Activated naive CD4-positive, alpha-beta T cell treated with anti-CD3 and anti-CD28 coated beads for 36 hours (primary cell): ENCODE measurements at regions of chr7 and their contacts with region 1.

Region 1: DNA sequence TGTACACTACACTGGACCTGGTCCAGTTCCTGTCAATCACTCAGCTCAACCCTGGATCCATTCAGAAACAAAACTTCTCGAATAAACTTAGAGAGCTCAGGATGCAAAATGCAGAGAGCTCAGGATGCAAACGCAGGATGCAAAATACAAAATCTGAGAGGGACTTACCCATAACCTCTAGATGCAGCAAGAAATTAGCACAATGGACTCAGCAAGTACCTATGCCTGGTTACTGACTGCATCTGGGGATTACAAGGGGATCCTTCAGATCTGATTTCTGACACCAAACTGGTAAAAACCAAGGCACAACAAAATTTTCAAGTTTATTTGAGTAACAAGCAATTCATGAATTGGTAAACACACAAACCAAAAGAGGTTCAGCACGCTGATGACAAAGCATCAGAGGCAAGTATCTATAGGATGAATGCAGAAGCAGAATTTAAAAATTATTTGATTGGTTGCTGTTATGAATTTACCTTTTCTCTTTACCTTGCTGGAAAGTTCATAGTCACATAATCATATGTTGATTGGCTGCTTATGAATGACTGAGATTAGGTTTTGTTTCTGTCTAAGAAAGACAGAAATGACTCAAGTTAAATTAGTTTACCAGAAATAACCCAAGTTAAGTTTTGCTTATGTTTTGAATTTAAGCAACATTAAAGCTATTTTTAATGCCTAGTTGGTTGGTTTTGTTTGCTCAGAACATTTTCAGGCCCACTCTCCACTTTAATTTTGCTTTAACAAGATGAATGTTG is 11.4 kb downstream of the GIMAP6 start:
- DNase-seq: peak; percentile 10
- H3K4me3 Mint-ChIP-seq: peak overlapping the region; percentile 8
- H3K27ac Mint-ChIP-seq: peak overlapping the region; percentile 82
- H3K4me1 Mint-ChIP-seq: peaks cover 53% of the 10 kb centered on the region
- H3K27me3 Mint-ChIP-seq: no peaks in the 10 kb centered on the region

Region 2: GRCh38 chr7:150507947-150508602 is 112.7 kb before region 1 on chr7:
- CTCF ChIA-PET with region 1: no interaction called
- intact Hi-C with region 1: loop called (anchors 1 kb)
- DNase-seq: peak; percentile 61
- H3K4me3 Mint-ChIP-seq: peak overlapping the region; percentile 79
- H3K27ac Mint-ChIP-seq: peak overlapping the region; percentile 96
- H3K4me1 Mint-ChIP-seq: peaks cover 97% of the 10 kb centered on the region
- H3K27me3 Mint-ChIP-seq: no peaks in the 10 kb centered on the region

Region 3: GRCh38 chr7:150631866-150632864 is 11.4 kb after region 1 on chr7 and contains the start of gene GIMAP6:
- CTCF ChIA-PET with region 1: interaction called, 9 read pairs
- intact Hi-C with region 1: loop called (anchors 1 kb)
- DNase-seq: peak; percentile 64
- H3K4me3 Mint-ChIP-seq: peak within 1 kb of the TSS; percentile 85
- H3K27ac Mint-ChIP-seq: peak within 1 kb of the TSS; percentile 92
- H3K4me1 Mint-ChIP-seq: peaks cover 67% of the 10 kb centered on the region
- H3K27me3 Mint-ChIP-seq: no peaks in the 10 kb centered on the region
- total RNA-seq, gene GIMAP6: 19.2 to 20.7 TPM

Region 4: DNA sequence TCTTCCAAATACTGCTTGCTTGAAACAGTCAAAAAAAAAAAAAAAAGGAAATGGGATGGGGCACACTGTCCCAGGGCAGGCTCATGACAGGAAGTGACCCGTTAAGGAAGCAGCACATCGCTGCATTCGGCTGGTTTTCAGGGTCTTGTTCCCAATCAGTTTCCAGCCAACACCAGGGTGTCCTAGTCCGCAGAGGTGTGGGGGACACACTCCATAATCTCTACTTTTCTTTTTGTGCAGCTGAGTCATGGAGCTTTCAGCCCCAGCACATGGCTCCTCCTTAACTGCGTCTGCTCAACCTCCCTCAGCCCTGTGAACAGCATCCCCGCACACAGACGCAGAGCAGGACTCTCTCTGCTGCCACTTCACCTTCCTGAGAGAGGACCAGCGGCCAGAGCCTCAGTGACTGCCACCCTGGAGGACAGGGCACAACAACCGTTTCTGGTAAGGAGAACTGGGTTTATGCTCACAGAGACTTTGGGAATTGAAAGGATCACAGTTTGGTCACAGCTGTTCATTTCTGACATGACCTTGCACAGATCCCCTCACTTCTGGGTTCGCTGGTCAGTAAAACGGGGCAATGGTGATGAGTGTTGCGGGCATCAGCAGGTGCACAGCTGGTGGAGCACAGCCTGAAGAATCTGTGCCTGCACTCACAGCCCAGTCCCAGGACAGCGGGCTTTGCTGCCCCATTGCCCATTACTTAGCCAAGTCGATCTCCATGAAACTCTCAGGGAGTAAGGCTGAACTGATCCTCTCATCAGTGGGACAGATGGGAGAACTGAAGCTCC is 116.7 kb after region 1 on chr7 and contains the start of gene GIMAP5:
- CTCF ChIA-PET with region 1: no interaction called
- intact Hi-C with region 1: loop called (anchors 1 kb)
- DNase-seq: peak; percentile 66
- H3K4me3 Mint-ChIP-seq: peak within 1 kb of the TSS; percentile 88
- H3K27ac Mint-ChIP-seq: peak within 1 kb of the TSS; percentile 95
- H3K4me1 Mint-ChIP-seq: peaks cover 72% of the 10 kb centered on the region
- H3K27me3 Mint-ChIP-seq: no peaks in the 10 kb centered on the region
- total RNA-seq, gene GIMAP5: 32.1 to 32.3 TPM

Region 5: GRCh38 chr7:150867605-150868004 is 246.8 kb after region 1 on chr7:
- CTCF ChIA-PET with region 1: no interaction called
- intact Hi-C with region 1: no loop called
- DNase-seq: no peak
- H3K4me3 Mint-ChIP-seq: no peak overlapping the region
- H3K27ac Mint-ChIP-seq: no peak overlapping the region
- H3K4me1 Mint-ChIP-seq: no peaks in the 10 kb centered on the region
- H3K27me3 Mint-ChIP-seq: no peaks in the 10 kb centered on the region